Activated CD4-positive, alpha-beta T cell treated with anti-CD3 and anti-CD28 coated beads for 36 hours (primary cell): ENCODE measurements at regions of chr3 and their contacts with region 1.

Region 1: GRCh38 chr3:9731206-9732079 is at the start of gene BRPF1:
- DNase-seq: peak; percentile 100
- ATAC-seq: peak; percentile 96
- H3K4me3 Mint-ChIP-seq: peak within 1 kb of the TSS; percentile 79
- H3K27ac Mint-ChIP-seq: peak within 1 kb of the TSS; percentile 96
- H3K4me1 Mint-ChIP-seq: peaks cover 67% of the 10 kb centered on the region
- H3K27me3 Mint-ChIP-seq: no peaks in the 10 kb centered on the region
- total RNA-seq, gene BRPF1: 23.3 to 25.9 TPM

Region 2: GRCh38 chr3:9352917-9353752 is 378.3 kb before region 1 on chr3:
- CTCF ChIA-PET with region 1: interaction called, 3 read pairs
- POLR2A ChIA-PET with region 1: no interaction called
- intact Hi-C with region 1: loop called (anchors 1 kb)
- DNase-seq: peak; percentile 76
- ATAC-seq: peak; percentile 47
- H3K4me3 Mint-ChIP-seq: no peak overlapping the region
- H3K27ac Mint-ChIP-seq: peak overlapping the region; percentile 24
- H3K4me1 Mint-ChIP-seq: peaks cover 24% of the 10 kb centered on the region
- H3K27me3 Mint-ChIP-seq: no peaks in the 10 kb centered on the region

Region 3: GRCh38 chr3:9503283-9503682 is 228.2 kb before region 1 on chr3:
- CTCF ChIA-PET with region 1: interaction called, 3 read pairs
- POLR2A ChIA-PET with region 1: no interaction called
- intact Hi-C with region 1: loop called (anchors 1 to 5 kb)
- DNase-seq: peak; percentile 84
- ATAC-seq: peak; percentile 67
- H3K4me3 Mint-ChIP-seq: no peak overlapping the region
- H3K27ac Mint-ChIP-seq: no peak overlapping the region
- H3K4me1 Mint-ChIP-seq: peaks cover 5% of the 10 kb centered on the region
- H3K27me3 Mint-ChIP-seq: peaks cover 22% of the 10 kb centered on the region

Region 4: DNA sequence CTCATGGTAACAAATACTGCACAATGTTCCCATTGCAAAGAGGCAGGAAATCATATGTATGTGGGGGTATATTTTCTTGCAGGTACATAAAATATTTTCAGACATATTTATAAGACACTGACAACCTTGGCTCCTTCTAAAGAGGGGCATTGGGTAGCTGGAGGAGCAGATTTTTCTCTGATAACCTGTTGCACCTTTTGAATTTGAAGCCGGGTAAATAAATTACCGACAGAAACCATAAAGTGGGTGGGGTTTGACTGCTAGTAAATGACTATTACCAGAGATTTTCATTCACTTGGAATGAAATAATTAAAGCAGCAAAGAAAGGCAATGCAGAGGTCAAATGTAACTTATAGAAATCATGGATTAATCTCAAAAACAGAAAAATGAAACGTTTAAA is 197.0 kb before region 1 on chr3:
- CTCF ChIA-PET with region 1: no interaction called
- POLR2A ChIA-PET with region 1: no interaction called
- intact Hi-C with region 1: no loop called
- DNase-seq: no peak
- ATAC-seq: no peak
- H3K4me3 Mint-ChIP-seq: no peak overlapping the region
- H3K27ac Mint-ChIP-seq: no peak overlapping the region
- H3K4me1 Mint-ChIP-seq: no peaks in the 10 kb centered on the region
- H3K27me3 Mint-ChIP-seq: peaks cover 4% of the 10 kb centered on the region

Region 5: GRCh38 chr3:9721015-9721699 is 10.3 kb before region 1 on chr3:
- CTCF ChIA-PET with region 1: interaction called, 15 read pairs
- POLR2A ChIA-PET with region 1: interaction called, 10 read pairs
- intact Hi-C with region 1: no loop called
- DNase-seq: no peak
- ATAC-seq: no peak
- H3K4me3 Mint-ChIP-seq: no peak overlapping the region
- H3K27ac Mint-ChIP-seq: no peak overlapping the region
- H3K4me1 Mint-ChIP-seq: peaks cover 9% of the 10 kb centered on the region
- H3K27me3 Mint-ChIP-seq: no peaks in the 10 kb centered on the region

Region 6: DNA sequence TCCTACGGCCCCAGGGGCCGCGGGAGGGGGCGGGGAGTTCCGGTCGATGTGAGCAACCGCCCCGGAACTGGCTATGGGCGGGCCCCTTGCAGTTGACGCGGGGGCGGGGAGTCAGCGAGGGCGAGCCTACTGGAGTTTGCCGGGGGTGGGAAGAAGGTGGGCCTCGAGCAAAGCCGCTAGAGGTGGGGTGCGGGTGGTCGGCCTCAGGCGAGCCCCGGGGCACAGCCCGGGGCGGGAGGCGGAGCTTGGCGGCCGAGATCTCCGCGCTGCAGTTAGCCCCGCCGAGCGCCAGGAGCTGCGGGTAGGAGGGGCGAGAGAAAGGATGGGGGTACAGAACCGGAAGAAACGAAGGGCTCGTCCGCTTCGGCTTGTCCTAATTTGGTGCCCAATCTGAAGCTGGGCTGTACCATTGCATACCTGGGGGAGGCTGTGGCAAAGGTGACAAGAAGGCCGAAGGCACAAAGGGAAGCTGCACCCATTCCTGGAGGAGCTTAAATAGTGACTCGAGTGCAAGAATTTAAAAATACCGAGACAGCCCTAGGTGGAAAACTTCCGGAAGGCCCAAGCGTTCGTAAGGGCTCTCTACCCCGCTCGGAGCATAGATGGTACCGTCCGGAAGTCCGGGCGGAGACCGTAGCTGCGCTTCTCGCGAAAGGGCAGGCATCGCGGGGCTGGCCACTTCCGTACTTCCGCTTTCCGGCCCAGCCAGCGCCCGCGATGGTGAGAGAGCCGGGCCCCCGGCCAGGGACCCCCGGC is 61.1 kb after region 1 on chr3 and contains the starts of genes ARPC4 and TADA3:
- CTCF ChIA-PET with region 1: interaction called, 11 read pairs
- POLR2A ChIA-PET with region 1: no interaction called
- intact Hi-C with region 1: loop called (anchors 1 kb)
- DNase-seq: peak; percentile 95
- ATAC-seq: peak; percentile 79
- H3K4me3 Mint-ChIP-seq: peak within 1 kb of the TSS; percentile 99
- H3K27ac Mint-ChIP-seq: peak within 1 kb of the TSS; percentile 100
- H3K4me1 Mint-ChIP-seq: peaks cover 73% of the 10 kb centered on the region
- H3K27me3 Mint-ChIP-seq: no peaks in the 10 kb centered on the region
- total RNA-seq, gene ARPC4: 164 to 231 TPM
- total RNA-seq, gene TADA3: 80.7 to 96.4 TPM

Region 7: GRCh38 chr3:9986237-9986725 is 254.8 kb after region 1 on chr3:
- CTCF ChIA-PET with region 1: no interaction called
- POLR2A ChIA-PET with region 1: no interaction called
- intact Hi-C with region 1: loop called in 1 of 2 experiments (anchors 2 kb)
- DNase-seq: no peak
- ATAC-seq: peak; percentile 31
- H3K4me3 Mint-ChIP-seq: peak overlapping the region; percentile 94
- H3K27ac Mint-ChIP-seq: peak overlapping the region; percentile 98
- H3K4me1 Mint-ChIP-seq: peaks cover 32% of the 10 kb centered on the region
- H3K27me3 Mint-ChIP-seq: no peaks in the 10 kb centered on the region

Region 8: GRCh38 chr3:10322352-10322710 is 590.9 kb after region 1 on chr3:
- CTCF ChIA-PET with region 1: no interaction called
- POLR2A ChIA-PET with region 1: no interaction called
- intact Hi-C with region 1: loop called in 1 of 2 experiments (anchors 1 kb)
- DNase-seq: peak; percentile 37
- ATAC-seq: peak; percentile 22
- H3K4me3 Mint-ChIP-seq: no peak overlapping the region
- H3K27ac Mint-ChIP-seq: peak overlapping the region; percentile 3
- H3K4me1 Mint-ChIP-seq: peaks cover 23% of the 10 kb centered on the region
- H3K27me3 Mint-ChIP-seq: peaks cover 4% of the 10 kb centered on the region

Region 9: DNA sequence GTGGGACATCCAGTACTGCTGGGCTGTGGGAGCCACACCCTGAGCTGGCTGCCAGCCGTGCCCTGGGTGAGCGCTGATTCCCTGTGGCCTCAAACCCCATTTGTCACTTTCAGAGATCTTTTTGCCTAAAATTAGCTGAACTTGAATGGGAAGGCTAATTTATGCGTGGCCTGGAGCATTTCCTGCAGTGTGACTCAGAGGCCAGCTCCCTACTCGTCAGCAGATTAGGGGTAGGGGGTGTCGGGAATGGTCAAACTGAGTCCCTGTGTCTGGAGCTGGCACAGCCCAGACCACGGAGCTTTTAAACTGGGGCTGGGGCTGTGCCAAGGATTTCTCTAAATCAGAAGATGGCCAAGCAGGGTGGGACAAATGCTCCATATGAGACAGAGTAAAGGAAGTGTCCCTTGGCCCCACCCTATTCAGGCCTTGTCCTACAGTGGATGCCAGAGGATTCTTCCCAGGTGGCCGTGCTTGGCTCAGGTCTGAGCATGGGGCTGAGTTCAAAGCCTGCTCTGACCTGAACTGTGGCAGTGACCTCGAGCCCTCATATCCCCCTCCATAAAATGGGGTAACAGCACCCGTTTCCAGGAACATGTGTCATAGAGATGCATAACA is 714.2 kb after region 1 on chr3:
- CTCF ChIA-PET with region 1: no interaction called
- POLR2A ChIA-PET with region 1: no interaction called
- intact Hi-C with region 1: no loop called
- DNase-seq: no peak
- ATAC-seq: no peak
- H3K4me3 Mint-ChIP-seq: no peak overlapping the region
- H3K27ac Mint-ChIP-seq: no peak overlapping the region
- H3K4me1 Mint-ChIP-seq: peaks cover 3% of the 10 kb centered on the region
- H3K27me3 Mint-ChIP-seq: peaks cover 3% of the 10 kb centered on the region